ENCODE measurements at regions of chr9 and their contacts with region 1.

Region 1: DNA sequence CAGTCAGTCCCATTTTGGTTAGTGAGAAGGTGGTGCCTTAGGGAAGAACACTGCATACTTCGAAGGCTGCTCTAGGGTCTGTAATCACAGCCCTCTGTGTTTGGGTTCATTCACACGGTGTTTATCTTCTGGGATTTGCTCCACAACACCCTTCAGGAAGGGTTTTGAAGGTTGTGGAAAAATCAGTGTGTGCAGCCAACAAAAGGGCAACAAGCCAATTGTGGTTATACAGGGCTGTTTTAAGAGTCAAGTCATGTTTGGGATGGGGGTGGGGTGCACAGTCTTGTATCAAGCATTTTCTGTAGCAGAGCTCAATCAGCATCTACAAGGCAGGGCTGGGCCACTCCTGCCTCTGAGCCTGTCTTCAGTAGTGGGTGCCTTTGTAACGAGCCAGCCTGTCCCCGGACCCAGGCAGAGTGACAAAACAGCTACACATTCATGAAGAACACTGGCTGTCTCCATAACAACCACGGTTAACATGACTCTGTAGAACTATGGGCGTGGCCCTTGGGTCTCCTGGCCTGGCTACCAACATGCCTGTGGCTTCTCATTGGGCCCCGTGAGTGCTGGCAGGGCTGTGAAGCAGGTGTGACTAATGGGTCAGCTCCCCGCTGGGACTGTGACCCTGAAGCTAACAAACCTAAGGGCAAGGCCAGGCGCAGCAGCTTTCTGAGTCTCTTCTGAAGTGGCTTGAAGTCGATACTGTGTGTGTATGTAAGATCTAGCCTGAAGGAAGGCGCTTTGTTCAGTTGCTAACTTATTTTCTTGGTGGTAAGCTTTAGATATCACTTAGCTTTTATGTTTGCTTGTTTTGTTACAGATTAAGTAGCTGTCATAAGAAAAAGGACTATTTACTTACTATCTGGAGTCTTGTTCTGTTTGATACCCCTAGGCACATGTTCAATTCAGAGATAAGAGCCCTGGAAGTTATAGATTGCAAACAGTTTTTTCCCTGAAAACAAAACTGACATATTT is 27.9 kb upstream of the GOLM1 start:
- DNase-seq: peak; percentile 96
- ATAC-seq: peak; percentile 98
- H3K4me3 ChIP-seq: peak overlapping the region in 1 of 2 experiments; percentile 39; a peak in 2 of 4 replicates
- H3K27ac ChIP-seq: peak overlapping the region; percentile 31
- H3K4me1 ChIP-seq: peaks cover 24 to 27% of the 10 kb centered on the region in 2 experiments
- H3K27me3 ChIP-seq: no peaks in the 10 kb centered on the region
- CTCF ChIP-seq: no peak
- POLR2A ChIP-seq: no peak
- RAD21 ChIP-seq: peak; percentile 13; the same call in 1 of the 2 replicates

Region 2: DNA sequence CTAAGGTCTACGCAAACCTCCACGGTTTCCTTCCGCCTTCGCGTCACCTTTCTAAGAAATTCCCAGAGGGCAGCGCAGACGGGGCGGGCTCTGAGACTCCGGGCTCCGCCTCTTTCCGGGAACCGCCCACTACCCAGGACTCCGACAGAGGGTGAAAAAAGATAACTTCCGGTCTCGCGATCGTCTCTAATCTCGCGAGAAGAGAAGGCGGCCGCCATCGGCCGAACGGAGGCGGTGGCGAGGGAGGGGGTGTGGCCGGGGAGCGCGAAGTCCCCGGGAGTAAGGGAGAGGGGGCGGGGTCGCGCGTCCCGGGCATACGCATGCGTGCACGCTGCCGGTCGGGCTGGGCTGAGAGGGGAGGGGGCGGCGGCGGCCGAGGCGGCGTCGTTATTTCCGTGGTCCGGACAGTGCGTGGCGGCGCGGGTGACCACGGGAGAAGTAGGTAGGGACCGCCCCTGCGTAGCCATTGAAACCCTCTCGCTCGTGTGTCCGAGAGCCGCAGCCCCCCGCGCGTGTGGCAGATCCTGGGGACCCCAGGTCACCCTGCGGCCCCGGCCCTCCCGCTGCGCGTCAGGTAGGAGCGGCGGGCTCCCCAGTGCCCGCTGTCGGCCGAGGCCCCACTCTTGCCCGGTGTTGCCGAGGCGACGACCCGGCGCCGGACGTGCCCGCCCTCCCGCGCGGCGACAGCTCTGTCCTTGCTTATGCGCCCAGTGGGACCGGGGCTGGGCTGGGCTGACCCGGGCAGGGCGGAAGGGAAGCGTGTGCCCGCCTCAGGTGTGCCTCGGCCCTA is 186.3 kb before region 1 on chr9 and contains the start of gene NAA35:
- CTCF ChIA-PET with region 1: no interaction called
- POLR2A ChIA-PET with region 1: no interaction called
- RAD21 ChIA-PET with region 1: no interaction called
- intact Hi-C with region 1: loop called (anchors 10 kb)
- DNase-seq: peak; percentile 97
- ATAC-seq: peak; percentile 87
- H3K4me3 ChIP-seq: peak within 1 kb of the TSS; percentile 70 to 93
- H3K27ac ChIP-seq: peak within 1 kb of the TSS; percentile 95
- H3K4me1 ChIP-seq: peaks cover 4 to 19% of the 10 kb centered on the region in 2 experiments; a peak in 2 of 4 replicates
- H3K27me3 ChIP-seq: no peaks in the 10 kb centered on the region
- CTCF ChIP-seq: no peak
- POLR2A ChIP-seq: no peak
- RAD21 ChIP-seq: no peak
- total RNA-seq, gene NAA35: 37.0 TPM

Region 3: DNA sequence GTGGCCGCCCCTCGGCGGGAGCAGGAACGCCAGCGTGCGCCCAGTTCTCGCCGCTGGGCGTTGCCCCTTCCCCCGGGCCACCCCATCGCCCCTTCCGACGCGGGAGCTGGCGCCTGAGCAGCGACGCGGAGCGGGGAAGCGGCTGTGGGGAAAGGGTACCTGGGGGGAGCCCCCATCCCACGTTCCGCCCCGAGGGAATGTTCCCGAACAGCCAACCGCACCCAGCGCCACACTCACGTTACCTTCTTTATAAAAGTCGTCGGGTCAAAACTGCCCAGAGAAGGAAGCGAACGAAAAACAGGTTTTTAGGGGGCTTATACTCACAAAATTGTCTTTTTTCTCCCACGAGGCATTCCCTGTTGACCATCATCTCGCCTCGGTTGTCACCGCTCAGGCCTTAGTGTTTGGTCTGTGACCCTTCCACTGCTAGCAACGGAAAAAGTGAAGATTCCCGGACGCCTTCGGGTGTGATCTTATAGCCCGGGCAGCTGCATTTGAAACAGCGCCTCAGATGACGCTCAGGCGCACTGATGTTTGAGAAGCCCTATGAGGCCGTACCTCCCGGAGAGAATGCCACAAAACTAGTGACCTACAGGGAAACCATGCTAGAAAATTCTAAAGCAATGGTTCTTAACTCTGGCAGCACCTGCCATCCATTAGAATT is 27.5 kb before region 1 on chr9:
- CTCF ChIA-PET with region 1: no interaction called
- POLR2A ChIA-PET with region 1: no interaction called
- RAD21 ChIA-PET with region 1: no interaction called
- intact Hi-C with region 1: loop called (anchors 1 kb)
- DNase-seq: peak; percentile 57
- ATAC-seq: peak; percentile 70
- H3K4me3 ChIP-seq: peak overlapping the region; percentile 57 to 64
- H3K27ac ChIP-seq: peak overlapping the region; percentile 84
- H3K4me1 ChIP-seq: peaks cover 9 to 41% of the 10 kb centered on the region in 2 experiments
- H3K27me3 ChIP-seq: no peaks in the 10 kb centered on the region
- CTCF ChIP-seq: no peak
- POLR2A ChIP-seq: peak; percentile 29
- RAD21 ChIP-seq: no peak

Region 4: GRCh38 chr9:86112057-86112456 is 15.2 kb before region 1 on chr9:
- CTCF ChIA-PET with region 1: no interaction called
- POLR2A ChIA-PET with region 1: no interaction called
- RAD21 ChIA-PET with region 1: no interaction called
- intact Hi-C with region 1: loop called (anchors 1 kb)
- DNase-seq: no peak
- ATAC-seq: no peak
- H3K4me3 ChIP-seq: no peak overlapping the region
- H3K27ac ChIP-seq: no peak overlapping the region
- H3K4me1 ChIP-seq: peaks cover 0 to 2% of the 10 kb centered on the region in 2 experiments; a peak in 3 of 4 replicates
- H3K27me3 ChIP-seq: no peaks in the 10 kb centered on the region
- CTCF ChIP-seq: no peak
- POLR2A ChIP-seq: no peak
- RAD21 ChIP-seq: no peak

Measured in HCT116 (cell line).